ENCODE measurements at regions of chr15 and their contacts with region 1.

Region 1: DNA sequence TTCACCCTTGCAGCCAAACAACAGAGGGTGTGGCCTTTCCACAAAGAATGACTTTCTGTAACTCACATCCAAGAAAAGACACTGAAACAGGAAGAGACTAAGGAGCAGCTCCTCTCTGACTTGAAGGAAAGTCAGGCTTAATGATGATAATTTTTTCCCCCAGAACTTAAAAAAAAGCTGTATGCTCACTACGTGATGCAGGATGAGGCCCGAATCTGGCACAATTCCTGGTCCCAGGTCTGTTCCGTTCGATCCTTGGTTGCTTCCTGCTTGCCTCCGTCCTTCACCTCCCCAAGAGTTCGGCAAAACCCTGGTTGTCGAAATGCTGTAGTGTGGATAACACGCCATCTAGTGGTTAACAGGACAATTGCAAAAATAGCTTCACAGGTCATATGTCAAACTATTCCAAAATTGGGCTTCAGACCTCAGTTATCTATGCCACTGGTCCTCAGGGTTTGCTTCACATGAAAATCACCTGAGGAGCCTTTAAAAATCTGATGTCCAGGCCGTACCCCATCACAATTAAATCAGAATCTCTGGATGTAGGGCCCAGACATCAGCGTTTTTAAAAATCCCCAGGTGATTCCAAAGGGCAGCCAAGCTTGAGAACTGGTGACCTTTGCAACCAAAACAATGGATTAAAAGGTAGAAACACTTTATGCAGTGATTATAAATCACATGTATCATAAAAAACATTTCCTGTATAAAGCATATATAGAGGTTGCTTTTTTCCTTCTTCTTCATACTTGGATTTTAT is 28.1 kb upstream of the SYNM start:
- DNase-seq: peak; percentile 50
- ATAC-seq: peak; percentile 92

Region 2: GRCh38 chr15:98442379-98442833 is 634.3 kb before region 1 on chr15:
- intact Hi-C with region 1: loop called (anchors 2 kb)
- DNase-seq: no peak
- ATAC-seq: peak; percentile 60

Region 3: GRCh38 chr15:98518823-98519561 is 557.7 kb before region 1 on chr15:
- intact Hi-C with region 1: loop called (anchors 5 kb)
- DNase-seq: no peak
- ATAC-seq: peak; percentile 88

Region 4: GRCh38 chr15:99511866-99512661 is 435.3 kb after region 1 on chr15:
- intact Hi-C with region 1: no loop called
- DNase-seq: no peak
- ATAC-seq: peak; percentile 47

Measured in Right ventricle myocardium superior (tissue), 1 donor.